ENCODE measurements at regions of chr21 and their contacts with region 1.

Region 1: DNA sequence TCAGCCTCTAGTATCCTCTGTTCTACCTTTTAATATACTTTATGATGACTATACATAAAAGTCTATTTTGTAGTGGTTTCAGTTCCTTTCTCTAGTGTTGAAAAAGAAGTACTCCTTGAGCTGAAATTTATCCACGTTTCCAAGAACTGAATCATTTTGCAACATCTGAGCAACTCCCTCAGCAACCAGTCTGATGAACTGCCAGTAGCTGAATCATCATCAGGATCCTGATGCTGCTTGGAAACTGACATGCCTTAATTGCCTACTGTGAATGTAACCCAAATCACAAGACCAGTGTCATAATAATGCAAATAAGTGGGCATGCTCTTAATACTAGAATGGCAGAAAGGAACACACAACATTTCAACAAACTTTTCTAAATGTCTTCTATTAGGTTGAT is 103.3 kb downstream of the CYYR1 start:
- DNase-seq: no peak
- H3K4me3 ChIP-seq: no peak overlapping the region
- H3K27ac ChIP-seq: no peak overlapping the region
- H3K4me1 ChIP-seq: no peaks in the 10 kb centered on the region
- H3K27me3 ChIP-seq: no peaks in the 10 kb centered on the region
- CTCF ChIP-seq: no peak
- POLR2A ChIP-seq: no peak

Region 2: GRCh38 chr21:26389971-26390641 is 79.7 kb before region 1 on chr21:
- CTCF ChIA-PET with region 1: no interaction called
- POLR2A ChIA-PET with region 1: no interaction called
- dilution Hi-C with region 1: no loop called
- intact Hi-C with region 1: loop called (anchors 2 kb)
- DNase-seq: peak; percentile 38
- H3K4me3 ChIP-seq: no peak overlapping the region
- H3K27ac ChIP-seq: peak overlapping the region; percentile 70
- H3K4me1 ChIP-seq: peaks cover 18% of the 10 kb centered on the region
- H3K27me3 ChIP-seq: no peaks in the 10 kb centered on the region
- CTCF ChIP-seq: no peak
- POLR2A ChIP-seq: no peak

Measured in endothelial cell of umbilical vein (primary cell).